CD8-positive, alpha-beta T cell (primary cell): ENCODE measurements at regions of chr2 and their contacts with region 1.

Region 1: DNA sequence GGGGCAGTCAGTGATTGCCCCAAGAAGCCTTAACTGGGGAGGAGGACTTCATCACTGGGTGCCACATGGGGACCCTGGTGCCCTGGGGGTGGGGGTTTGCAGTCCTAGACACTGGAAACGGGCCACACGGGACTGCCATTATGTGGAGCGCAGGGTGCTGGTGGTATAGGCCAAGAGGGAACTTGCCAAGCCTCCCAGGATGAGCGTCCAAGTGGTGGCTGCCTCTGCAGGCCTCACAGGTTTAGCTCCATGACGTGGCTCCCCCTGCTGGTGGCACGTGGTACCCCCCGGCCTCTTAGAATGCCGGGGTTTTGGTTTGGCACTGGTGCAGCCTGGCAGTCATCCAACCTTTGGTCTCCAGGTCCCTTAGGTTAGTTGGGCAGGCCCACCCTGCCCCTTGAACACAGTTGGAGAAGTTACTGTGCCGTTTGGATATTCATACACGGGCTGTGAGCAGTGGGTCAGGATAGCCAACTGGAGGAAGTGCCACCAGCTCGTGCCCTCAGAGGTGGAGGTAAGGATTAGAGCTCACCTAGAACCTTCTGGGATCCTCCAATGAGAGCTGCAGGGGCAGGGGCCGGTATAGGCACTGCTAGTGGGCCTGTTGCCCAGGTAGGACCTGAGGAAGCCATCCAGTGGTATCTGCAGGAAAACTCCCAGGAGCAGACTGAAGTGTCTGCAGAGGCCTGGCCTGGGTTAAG is 5.6 kb downstream of the PTMA start:
- DNase-seq: peak; percentile 84 to 95 (median 91)
- ATAC-seq: peak; percentile 43
- H3K4me3 ChIP-seq: no peak overlapping the region
- H3K4me3 Mint-ChIP-seq: peak overlapping the region; percentile 54
- H3K27ac ChIP-seq: peak overlapping the region in 1 of 2 experiments; percentile 55
- H3K27ac Mint-ChIP-seq: peak overlapping the region; percentile 94
- H3K4me1 ChIP-seq: peaks cover 37% of the 10 kb centered on the region
- H3K4me1 Mint-ChIP-seq: peaks cover 39% of the 10 kb centered on the region
- H3K27me3 ChIP-seq: no peaks in the 10 kb centered on the region
- H3K27me3 Mint-ChIP-seq: no peaks in the 10 kb centered on the region
- CTCF ChIP-seq: peak; percentile 81

Region 2: DNA sequence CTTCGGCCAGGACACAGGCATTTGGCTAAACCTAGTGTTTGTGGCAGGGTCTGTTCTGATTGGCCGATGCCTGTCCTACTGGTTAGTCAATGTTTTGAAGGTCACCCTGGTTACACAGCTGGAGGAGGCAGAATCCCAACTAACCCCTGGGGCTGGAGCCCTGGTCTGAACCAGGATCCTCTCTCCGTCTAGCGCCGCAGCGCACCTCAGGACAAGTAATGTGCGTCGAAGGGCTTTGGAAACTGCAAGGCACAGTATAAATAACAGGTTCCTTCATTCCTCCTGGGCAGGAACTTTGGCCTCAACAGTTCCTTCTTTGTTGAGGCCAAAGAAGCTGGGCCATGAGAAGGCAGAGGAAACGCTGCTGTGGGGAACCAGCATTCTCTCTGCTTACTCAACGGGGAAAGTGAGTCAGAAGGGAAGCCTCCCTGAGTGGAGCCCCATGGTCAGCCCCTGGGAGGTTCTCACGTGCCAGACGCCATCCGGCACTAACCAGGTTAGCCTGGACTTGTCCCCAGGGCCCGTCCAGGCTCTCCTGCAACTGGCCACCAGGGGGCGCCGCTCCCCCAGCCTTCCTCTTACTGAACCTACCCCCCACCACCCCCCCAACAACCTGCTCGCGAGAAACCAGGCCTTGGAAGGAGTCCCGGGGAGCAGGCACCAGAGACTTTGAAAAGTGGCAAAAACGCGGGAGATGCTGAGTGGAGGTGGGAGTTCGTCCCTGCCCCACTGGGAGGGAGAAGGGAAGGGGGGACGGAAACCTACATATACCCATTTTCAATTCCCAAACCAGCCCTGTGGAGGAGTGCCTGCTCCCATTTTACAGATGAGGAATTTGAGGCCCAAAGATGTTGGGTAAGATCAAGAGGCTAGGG is 101.5 kb before region 1 on chr2:
- CTCF ChIA-PET with region 1: interaction called, 160 read pairs
- POLR2A ChIA-PET with region 1: interaction called, 38 read pairs
- intact Hi-C with region 1: loop called (anchors 1 kb)
- DNase-seq: peak; percentile 73 to 92 (median 88)
- ATAC-seq: peak; percentile 78
- H3K4me3 ChIP-seq: peak overlapping the region in 1 of 2 experiments; percentile 55
- H3K4me3 Mint-ChIP-seq: peak overlapping the region; percentile 88
- H3K27ac ChIP-seq: peak overlapping the region in 1 of 2 experiments; percentile 17
- H3K27ac Mint-ChIP-seq: peak overlapping the region; percentile 42
- H3K4me1 ChIP-seq: peaks cover 16% of the 10 kb centered on the region
- H3K4me1 Mint-ChIP-seq: peaks cover 23% of the 10 kb centered on the region
- H3K27me3 ChIP-seq: peaks cover 0 to 5% of the 10 kb centered on the region in 2 experiments
- H3K27me3 Mint-ChIP-seq: no peaks in the 10 kb centered on the region
- CTCF ChIP-seq: peak; percentile 82

Region 3: DNA sequence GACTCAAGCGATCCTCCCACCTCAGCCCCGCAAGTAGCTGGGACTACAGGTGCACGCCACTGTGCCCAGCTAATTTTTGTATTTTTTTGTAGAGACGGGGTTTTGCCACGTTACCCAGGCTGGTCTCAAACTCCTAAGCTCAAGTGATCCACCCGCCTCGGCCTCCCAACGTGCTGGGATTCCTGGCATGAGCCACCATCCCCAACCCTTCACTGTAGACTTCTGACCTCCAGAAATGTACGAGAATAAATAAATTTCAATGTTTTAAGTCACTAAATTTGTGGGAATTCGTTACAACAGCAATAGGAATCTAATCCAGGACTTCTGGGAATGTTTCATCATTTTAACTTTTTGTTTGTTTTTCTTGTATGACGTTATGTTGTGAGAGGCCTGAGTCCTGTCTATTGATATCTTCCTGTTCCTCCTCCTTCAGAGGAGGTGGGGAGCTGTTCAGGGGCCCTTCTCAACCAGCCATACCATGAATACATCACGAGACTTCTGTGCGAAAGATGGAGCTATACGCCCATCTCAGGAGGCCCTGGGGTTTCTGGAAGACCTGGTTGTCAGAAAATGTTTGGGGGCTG is 81.2 kb before region 1 on chr2:
- CTCF ChIA-PET with region 1: interaction called, 10 read pairs
- POLR2A ChIA-PET with region 1: interaction called, 3 read pairs
- intact Hi-C with region 1: no loop called
- DNase-seq: no peak
- ATAC-seq: no peak
- H3K4me3 ChIP-seq: no peak overlapping the region
- H3K4me3 Mint-ChIP-seq: no peak overlapping the region
- H3K27ac ChIP-seq: no peak overlapping the region
- H3K27ac Mint-ChIP-seq: no peak overlapping the region
- H3K4me1 ChIP-seq: no peaks in the 10 kb centered on the region
- H3K4me1 Mint-ChIP-seq: peaks cover 3% of the 10 kb centered on the region
- H3K27me3 ChIP-seq: no peaks in the 10 kb centered on the region
- H3K27me3 Mint-ChIP-seq: no peaks in the 10 kb centered on the region
- CTCF ChIP-seq: no peak

Region 4: GRCh38 chr2:231648587-231649174 is 65.2 kb before region 1 on chr2:
- CTCF ChIA-PET with region 1: interaction called, 10 read pairs
- POLR2A ChIA-PET with region 1: no interaction called
- intact Hi-C with region 1: loop called (anchors 1 kb)
- DNase-seq: peak in 7 of 9 experiments; percentile 31 to 65 (median 48)
- ATAC-seq: peak; percentile 77
- H3K4me3 ChIP-seq: no peak overlapping the region
- H3K4me3 Mint-ChIP-seq: no peak overlapping the region
- H3K27ac ChIP-seq: no peak overlapping the region
- H3K27ac Mint-ChIP-seq: no peak overlapping the region
- H3K4me1 ChIP-seq: no peaks in the 10 kb centered on the region
- H3K4me1 Mint-ChIP-seq: peaks cover 2% of the 10 kb centered on the region
- H3K27me3 ChIP-seq: no peaks in the 10 kb centered on the region
- H3K27me3 Mint-ChIP-seq: no peaks in the 10 kb centered on the region
- CTCF ChIP-seq: no peak

Region 5: DNA sequence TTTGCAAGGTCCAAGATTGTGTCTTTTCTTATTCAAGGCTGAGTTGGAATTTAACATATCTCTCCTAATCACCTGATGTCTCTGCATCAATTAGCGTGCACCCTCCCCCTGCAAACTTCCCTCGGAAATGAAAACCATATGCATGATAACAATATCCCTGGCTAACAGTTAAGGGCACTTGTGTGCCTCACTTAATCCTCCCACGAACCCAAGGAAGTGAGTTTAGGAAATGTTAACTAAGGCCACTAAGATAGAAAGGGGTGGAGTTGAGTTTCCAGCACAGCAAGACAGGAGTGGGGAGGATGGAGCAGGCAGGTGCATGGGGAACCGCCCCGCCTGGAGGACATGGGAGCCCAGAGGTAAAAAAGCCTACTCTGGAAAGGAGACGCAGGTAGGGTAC is 58.0 kb before region 1 on chr2:
- CTCF ChIA-PET with region 1: interaction called, 26 read pairs
- POLR2A ChIA-PET with region 1: interaction called, 129 read pairs
- intact Hi-C with region 1: no loop called
- DNase-seq: no peak
- ATAC-seq: no peak
- H3K4me3 ChIP-seq: no peak overlapping the region
- H3K4me3 Mint-ChIP-seq: no peak overlapping the region
- H3K27ac ChIP-seq: no peak overlapping the region
- H3K27ac Mint-ChIP-seq: no peak overlapping the region
- H3K4me1 ChIP-seq: no peaks in the 10 kb centered on the region
- H3K4me1 Mint-ChIP-seq: no peaks in the 10 kb centered on the region
- H3K27me3 ChIP-seq: no peaks in the 10 kb centered on the region
- H3K27me3 Mint-ChIP-seq: no peaks in the 10 kb centered on the region
- CTCF ChIP-seq: no peak

Region 6: DNA sequence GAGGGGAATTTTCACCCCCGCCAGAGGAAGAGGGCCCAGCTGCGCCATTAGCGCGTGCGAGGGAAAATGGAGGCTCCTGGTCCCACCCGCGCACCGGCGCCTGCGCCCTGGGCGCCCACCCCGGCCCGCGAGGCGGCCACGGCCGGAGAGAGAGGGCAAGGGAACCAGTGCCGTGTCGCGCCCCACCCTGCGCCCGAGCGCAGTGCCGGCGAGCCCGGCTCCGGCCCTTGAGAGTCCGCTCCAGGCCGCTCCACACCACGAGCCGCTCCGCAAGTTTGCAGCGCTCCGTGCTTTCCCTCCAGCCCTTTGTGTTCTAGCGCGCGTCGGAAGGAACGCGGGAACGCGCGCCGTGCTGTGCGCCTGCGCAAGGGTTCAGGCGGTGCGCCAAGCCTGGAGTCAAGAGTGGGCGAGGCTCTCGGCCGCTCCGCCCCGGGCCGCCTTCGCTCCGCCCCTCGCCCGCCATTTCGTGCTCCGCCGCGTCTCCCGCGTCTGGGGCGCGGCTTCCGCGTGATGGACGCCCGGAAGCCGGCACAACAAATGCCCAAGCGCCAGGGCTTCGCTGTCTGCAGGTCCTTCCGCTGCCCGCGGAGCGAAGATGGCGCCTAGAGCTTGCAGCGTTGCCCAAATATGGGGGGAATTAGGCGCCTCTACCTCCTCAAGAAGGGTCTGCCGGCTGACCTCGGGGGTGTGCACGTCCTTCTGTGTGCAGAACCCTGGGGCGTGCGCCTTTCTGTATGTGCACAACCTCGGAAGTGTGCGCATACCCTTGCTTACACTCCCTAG is 51.7 kb before region 1 on chr2:
- CTCF ChIA-PET with region 1: interaction called, 70 read pairs
- POLR2A ChIA-PET with region 1: interaction called, 129 read pairs
- intact Hi-C with region 1: no loop called
- DNase-seq: peak; percentile 94 to 99 (median 96)
- ATAC-seq: peak; percentile 91
- H3K4me3 ChIP-seq: peak overlapping the region; percentile 60 to 82
- H3K4me3 Mint-ChIP-seq: peak overlapping the region; percentile 77
- H3K27ac ChIP-seq: peak overlapping the region; percentile 87 to 94
- H3K27ac Mint-ChIP-seq: peak overlapping the region; percentile 97
- H3K4me1 ChIP-seq: peaks cover 16% of the 10 kb centered on the region
- H3K4me1 Mint-ChIP-seq: peaks cover 14% of the 10 kb centered on the region
- H3K27me3 ChIP-seq: no peaks in the 10 kb centered on the region
- H3K27me3 Mint-ChIP-seq: no peaks in the 10 kb centered on the region
- CTCF ChIP-seq: no peak

Region 7: GRCh38 chr2:231687133-231687852 is 26.6 kb before region 1 on chr2:
- CTCF ChIA-PET with region 1: interaction called, 783 read pairs
- POLR2A ChIA-PET with region 1: interaction called, 8 read pairs
- intact Hi-C with region 1: loop called (anchors 1 kb)
- DNase-seq: peak; percentile 39 to 82 (median 72)
- ATAC-seq: peak; percentile 95
- H3K4me3 ChIP-seq: no peak overlapping the region
- H3K4me3 Mint-ChIP-seq: no peak overlapping the region
- H3K27ac ChIP-seq: no peak overlapping the region
- H3K27ac Mint-ChIP-seq: no peak overlapping the region
- H3K4me1 ChIP-seq: no peaks in the 10 kb centered on the region
- H3K4me1 Mint-ChIP-seq: peaks cover 5% of the 10 kb centered on the region
- H3K27me3 ChIP-seq: no peaks in the 10 kb centered on the region
- H3K27me3 Mint-ChIP-seq: peaks cover 6% of the 10 kb centered on the region
- CTCF ChIP-seq: peak; percentile 63

Region 8: DNA sequence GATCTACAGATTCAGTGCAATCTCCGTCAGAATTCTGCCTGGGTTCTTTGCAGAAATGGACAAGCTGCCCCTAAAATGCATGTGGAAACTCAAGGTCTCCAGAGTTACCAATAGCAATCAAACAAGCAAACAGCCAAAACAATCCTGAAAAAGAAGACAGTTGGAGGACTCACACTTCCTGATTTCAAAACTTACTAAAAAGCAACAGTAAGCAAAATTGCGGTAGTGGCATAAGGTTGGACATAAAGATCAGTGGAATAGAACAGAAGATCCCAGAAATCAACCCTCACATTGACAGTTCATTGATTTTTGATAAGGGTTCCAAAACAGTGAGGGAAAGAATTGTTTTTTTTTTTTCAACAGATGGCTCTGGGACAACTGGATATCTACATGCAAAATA is 152.6 kb after region 1 on chr2:
- CTCF ChIA-PET with region 1: no interaction called
- POLR2A ChIA-PET with region 1: no interaction called
- intact Hi-C with region 1: no loop called
- DNase-seq: no peak
- ATAC-seq: no peak
- H3K4me3 ChIP-seq: no peak overlapping the region
- H3K4me3 Mint-ChIP-seq: no peak overlapping the region
- H3K27ac ChIP-seq: no peak overlapping the region
- H3K27ac Mint-ChIP-seq: no peak overlapping the region
- H3K4me1 ChIP-seq: no peaks in the 10 kb centered on the region
- H3K4me1 Mint-ChIP-seq: no peaks in the 10 kb centered on the region
- H3K27me3 ChIP-seq: peaks cover 0 to 3% of the 10 kb centered on the region in 2 experiments
- H3K27me3 Mint-ChIP-seq: peaks cover 14% of the 10 kb centered on the region
- CTCF ChIP-seq: no peak

Region 9: GRCh38 chr2:232955856-232956255 is 1242.0 kb after region 1 on chr2:
- CTCF ChIA-PET with region 1: no interaction called
- POLR2A ChIA-PET with region 1: no interaction called
- intact Hi-C with region 1: no loop called
- DNase-seq: no peak
- ATAC-seq: no peak
- H3K4me3 ChIP-seq: no peak overlapping the region
- H3K4me3 Mint-ChIP-seq: no peak overlapping the region
- H3K27ac ChIP-seq: no peak overlapping the region
- H3K27ac Mint-ChIP-seq: no peak overlapping the region
- H3K4me1 ChIP-seq: no peaks in the 10 kb centered on the region
- H3K4me1 Mint-ChIP-seq: no peaks in the 10 kb centered on the region
- H3K27me3 ChIP-seq: no peaks in the 10 kb centered on the region
- H3K27me3 Mint-ChIP-seq: peaks cover 8% of the 10 kb centered on the region
- CTCF ChIP-seq: no peak